K562 (cell line): ENCODE measurements at regions of chr14 and their contacts with region 1.

Region 1: DNA sequence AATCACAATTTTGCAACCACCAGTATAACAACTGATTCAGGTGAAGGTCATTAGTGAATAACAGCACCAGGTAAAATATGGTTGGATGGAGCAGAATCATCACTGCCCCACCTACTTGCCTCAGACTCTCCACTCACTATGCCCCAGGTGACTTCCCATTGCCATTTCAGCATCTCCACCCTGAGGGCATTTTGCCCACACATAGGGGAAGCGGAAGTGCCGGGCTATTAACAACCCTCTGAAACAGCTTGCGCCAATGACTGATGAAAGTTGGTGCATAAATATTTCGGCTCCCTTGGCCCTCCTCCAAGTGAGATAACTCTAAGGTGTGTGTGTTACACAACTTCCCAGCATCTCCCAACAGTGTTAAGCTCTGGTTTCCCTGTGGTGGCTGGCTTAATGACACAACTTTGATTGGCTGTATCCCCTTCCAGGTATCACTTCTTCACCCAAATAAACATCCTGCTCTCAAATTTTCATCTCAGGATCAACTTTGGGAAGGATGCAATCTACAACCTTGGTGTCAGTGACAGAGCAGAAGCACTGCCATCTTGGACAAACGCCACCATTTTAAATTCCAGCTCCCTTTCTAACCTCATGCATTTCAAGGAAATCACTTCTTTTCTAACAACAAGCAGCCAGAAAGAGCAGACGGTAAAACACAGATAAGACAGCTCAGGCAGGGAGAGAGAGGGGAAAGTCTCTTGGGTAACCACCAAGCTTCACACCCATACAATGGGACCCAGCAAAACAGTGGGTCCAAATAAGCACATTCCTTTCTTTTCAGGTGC is 73.6 kb upstream of the PPP2R5C start:
- DNase-seq: peak in 2 of 4 experiments; percentile 22 to 72
- ATAC-seq: peak; percentile 59
- H3K4me3 ChIP-seq: no peak overlapping the region
- H3K27ac ChIP-seq: peak overlapping the region; percentile 50; the same call in 2 of the 3 replicates
- H3K4me1 ChIP-seq: peaks cover 22 to 28% of the 10 kb centered on the region in 2 experiments; a peak in 4 of 5 replicates
- H3K27me3 ChIP-seq: no peaks in the 10 kb centered on the region
- CTCF ChIP-seq: no peak
- EP300 ChIP-seq: peak; percentile 28; the same call in 1 of the 2 replicates
- POLR2A ChIP-seq: no peak
- RAD21 ChIP-seq: no peak

Region 2: DNA sequence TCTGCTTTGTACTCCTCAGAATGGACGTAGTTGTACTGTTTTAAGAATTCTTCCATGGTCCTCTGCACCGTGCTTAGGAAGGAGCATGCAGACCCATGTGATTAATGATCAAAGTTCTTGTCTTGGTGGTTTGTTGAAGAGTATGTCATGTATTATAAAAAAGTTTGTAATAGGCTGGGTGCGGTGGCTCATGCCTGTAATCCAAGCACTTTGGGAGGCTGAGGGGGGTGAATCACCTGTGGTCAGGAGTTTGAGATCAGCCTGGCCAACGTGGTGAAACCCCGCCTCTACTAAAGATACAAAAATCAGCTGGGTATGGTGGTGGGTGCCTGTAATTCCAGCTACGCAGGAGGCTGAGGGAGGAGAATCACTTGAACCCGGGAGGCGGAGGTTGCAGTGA is 722.7 kb before region 1 on chr14:
- CTCF ChIA-PET with region 1: no interaction called
- POLR2A ChIA-PET with region 1: no interaction called
- in situ Hi-C with region 1: no loop called
- intact Hi-C with region 1: no loop called
- DNase-seq: no peak
- ATAC-seq: no peak
- H3K4me3 ChIP-seq: no peak overlapping the region
- H3K27ac ChIP-seq: no peak overlapping the region
- H3K4me1 ChIP-seq: no peaks in the 10 kb centered on the region
- H3K27me3 ChIP-seq: no peaks in the 10 kb centered on the region
- CTCF ChIP-seq: no peak
- EP300 ChIP-seq: no peak
- POLR2A ChIP-seq: no peak
- RAD21 ChIP-seq: no peak

Region 3: GRCh38 chr14:101820283-101820798 is 132.4 kb after region 1 on chr14:
- CTCF ChIA-PET with region 1: no interaction called
- POLR2A ChIA-PET with region 1: no interaction called
- in situ Hi-C with region 1: no loop called
- intact Hi-C with region 1: no loop called
- DNase-seq: no peak
- ATAC-seq: no peak
- H3K4me3 ChIP-seq: no peak overlapping the region
- H3K27ac ChIP-seq: no peak overlapping the region
- H3K4me1 ChIP-seq: peaks cover 0 to 34% of the 10 kb centered on the region in 2 experiments; a peak in 4 of 5 replicates
- H3K27me3 ChIP-seq: no peaks in the 10 kb centered on the region
- CTCF ChIP-seq: no peak
- EP300 ChIP-seq: no peak
- POLR2A ChIP-seq: no peak
- RAD21 ChIP-seq: no peak

Region 4: DNA sequence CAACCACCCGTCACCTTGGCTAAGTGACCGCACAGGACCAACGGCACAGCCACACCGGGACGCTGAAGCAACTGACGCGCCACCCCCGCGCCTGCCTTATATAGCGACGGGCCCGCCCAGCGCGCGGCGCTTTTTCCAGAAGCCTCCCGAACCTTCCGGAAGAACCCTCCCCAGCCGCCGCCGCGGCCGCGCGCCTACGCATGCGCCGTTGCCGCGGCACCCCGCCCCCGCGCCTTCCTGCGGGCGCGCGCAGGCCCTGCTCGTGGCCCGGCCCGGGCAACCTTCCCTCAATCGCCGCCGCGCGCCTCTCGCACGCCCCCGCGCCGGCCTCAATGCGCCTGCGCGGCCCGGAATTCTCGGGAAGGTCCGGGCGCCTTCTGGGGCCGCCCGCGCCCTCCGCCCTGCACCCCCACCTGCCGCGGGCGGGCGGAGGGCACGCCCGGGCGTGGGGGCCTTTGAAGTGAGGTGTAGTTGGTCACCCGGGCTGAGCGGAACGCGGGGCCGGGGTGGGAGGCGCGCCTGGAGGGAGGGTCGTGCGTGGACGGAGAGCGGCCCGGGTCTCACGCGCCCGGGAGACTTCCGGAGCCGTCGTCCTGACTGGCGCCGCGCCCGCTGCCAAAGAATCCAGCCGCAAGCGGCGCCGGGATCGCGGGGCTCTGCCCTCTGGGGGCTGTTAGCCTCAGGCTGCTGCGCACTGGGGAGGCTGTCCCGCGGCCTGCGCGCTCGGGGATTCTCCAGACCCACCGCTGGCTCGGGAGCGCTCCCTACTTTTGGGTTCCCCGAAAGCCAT is 399.2 kb after region 1 on chr14 and contains the start of gene HSP90AA1:
- CTCF ChIA-PET with region 1: no interaction called
- POLR2A ChIA-PET with region 1: no interaction called
- in situ Hi-C with region 1: no loop called
- intact Hi-C with region 1: loop called (anchors 5 kb)
- DNase-seq: peak; percentile 86 to 94 (median 90)
- ATAC-seq: peak; percentile 81
- H3K4me3 ChIP-seq: peak within 1 kb of the TSS; percentile 89
- H3K27ac ChIP-seq: peak within 1 kb of the TSS; percentile 97
- H3K4me1 ChIP-seq: peaks cover 21 to 34% of the 10 kb centered on the region in 2 experiments; a peak in 4 of 5 replicates
- H3K27me3 ChIP-seq: no peaks in the 10 kb centered on the region
- CTCF ChIP-seq: peak in 2 of 3 experiments; percentile 12 to 14; a peak in 1 of 6 replicates
- EP300 ChIP-seq: peak; percentile 65
- POLR2A ChIP-seq: peak; percentile 98
- RAD21 ChIP-seq: no peak
- polyA plus RNA-seq, gene HSP90AA1: 787 to 1,003 TPM